Calu3 (cell line): ENCODE measurements at regions of chr3 and their contacts with region 1.

Region 1: GRCh38 chr3:89851974-89852621 is 744.7 kb downstream of the EPHA3 start:
- DNase-seq: peak; percentile 78
- H3K4me3 Mint-ChIP-seq: no peak overlapping the region
- H3K27ac Mint-ChIP-seq: no peak overlapping the region
- H3K4me1 Mint-ChIP-seq: no peaks in the 10 kb centered on the region
- H3K27me3 Mint-ChIP-seq: no peaks in the 10 kb centered on the region
- CTCF ChIP-seq: peak; percentile 53

Region 2: DNA sequence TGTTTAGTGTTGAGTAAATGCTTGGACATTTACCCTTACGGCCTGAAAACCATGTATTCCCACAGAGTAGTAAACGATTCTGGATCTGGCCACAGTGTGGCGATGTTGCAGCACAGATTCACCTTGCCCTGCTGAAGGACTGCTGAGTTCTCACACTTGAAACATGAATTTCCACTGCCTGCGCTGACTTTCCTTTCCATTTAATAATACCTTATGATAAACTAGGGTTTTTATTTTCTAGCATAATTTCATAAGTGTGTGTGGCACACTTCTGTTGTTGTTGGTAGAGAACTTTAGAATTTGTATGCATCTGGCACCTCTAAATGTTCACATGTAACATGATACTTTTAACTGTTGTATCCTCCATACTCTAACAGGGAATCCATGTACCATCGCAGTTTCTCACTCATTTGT is 1648.4 kb before region 1 on chr3:
- CTCF ChIA-PET with region 1: no interaction called
- intact Hi-C with region 1: loop called (anchors 1 kb)
- DNase-seq: peak; percentile 79
- H3K4me3 Mint-ChIP-seq: no peak overlapping the region
- H3K27ac Mint-ChIP-seq: no peak overlapping the region
- H3K4me1 Mint-ChIP-seq: peaks cover 19% of the 10 kb centered on the region
- H3K27me3 Mint-ChIP-seq: no peaks in the 10 kb centered on the region
- CTCF ChIP-seq: peak; percentile 63

Region 3: GRCh38 chr3:89107461-89108290 is 744.4 kb before region 1 on chr3 and contains the start of gene EPHA3:
- CTCF ChIA-PET with region 1: interaction called, 12 read pairs
- intact Hi-C with region 1: loop called (anchors 5 kb)
- DNase-seq: peak; percentile 89
- H3K4me3 Mint-ChIP-seq: peak within 1 kb of the TSS; percentile 79
- H3K27ac Mint-ChIP-seq: peak within 1 kb of the TSS; percentile 50
- H3K4me1 Mint-ChIP-seq: peaks cover 11% of the 10 kb centered on the region
- H3K27me3 Mint-ChIP-seq: no peaks in the 10 kb centered on the region
- CTCF ChIP-seq: no peak
- total RNA-seq, gene EPHA3: 28.8 and 31.6 TPM in 2 replicates

Region 4: DNA sequence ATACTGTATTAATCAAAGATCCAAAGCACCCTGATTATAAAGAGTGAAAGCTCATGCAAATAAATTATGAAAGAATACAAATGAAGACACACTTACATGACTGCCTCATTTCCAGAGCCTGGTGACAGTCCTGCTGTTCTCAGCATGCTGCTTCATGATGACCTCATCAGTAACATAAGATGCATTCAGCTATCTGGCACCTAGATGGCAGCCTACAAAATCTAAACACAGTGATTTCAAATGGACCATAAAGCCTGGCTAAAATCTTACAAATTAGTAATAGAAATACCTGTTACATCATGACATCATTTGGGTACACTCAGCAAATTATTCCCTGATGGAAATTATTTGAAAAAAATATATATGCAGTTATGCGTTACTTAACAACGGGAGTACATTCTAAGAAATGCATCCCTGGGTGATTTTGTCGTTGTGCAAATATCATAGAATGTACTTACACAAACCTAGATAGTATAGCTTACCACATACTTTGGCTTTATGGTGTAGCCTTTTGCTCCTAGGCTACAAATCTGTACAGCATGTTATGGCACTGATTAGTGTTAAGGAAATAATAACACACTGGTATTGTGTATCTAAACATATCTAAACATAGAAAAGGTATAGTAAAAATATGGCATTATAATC is 537.5 kb before region 1 on chr3:
- CTCF ChIA-PET with region 1: no interaction called
- intact Hi-C with region 1: loop called (anchors 10 kb)
- DNase-seq: no peak
- H3K4me3 Mint-ChIP-seq: no peak overlapping the region
- H3K27ac Mint-ChIP-seq: no peak overlapping the region
- H3K4me1 Mint-ChIP-seq: no peaks in the 10 kb centered on the region
- H3K27me3 Mint-ChIP-seq: no peaks in the 10 kb centered on the region
- CTCF ChIP-seq: no peak

Region 5: GRCh38 chr3:89560546-89560945 is 291.6 kb before region 1 on chr3:
- CTCF ChIA-PET with region 1: interaction called, 4 read pairs
- intact Hi-C with region 1: loop called (anchors 5 kb)
- DNase-seq: no peak
- H3K4me3 Mint-ChIP-seq: no peak overlapping the region
- H3K27ac Mint-ChIP-seq: no peak overlapping the region
- H3K4me1 Mint-ChIP-seq: peaks cover 28% of the 10 kb centered on the region
- H3K27me3 Mint-ChIP-seq: no peaks in the 10 kb centered on the region
- CTCF ChIP-seq: no peak

Region 6: GRCh38 chr3:89690646-89691045 is 161.5 kb before region 1 on chr3:
- CTCF ChIA-PET with region 1: no interaction called
- intact Hi-C with region 1: loop called (anchors 10 kb)
- DNase-seq: no peak
- H3K4me3 Mint-ChIP-seq: no peak overlapping the region
- H3K27ac Mint-ChIP-seq: no peak overlapping the region
- H3K4me1 Mint-ChIP-seq: peaks cover 13% of the 10 kb centered on the region
- H3K27me3 Mint-ChIP-seq: no peaks in the 10 kb centered on the region
- CTCF ChIP-seq: no peak

Region 7: DNA sequence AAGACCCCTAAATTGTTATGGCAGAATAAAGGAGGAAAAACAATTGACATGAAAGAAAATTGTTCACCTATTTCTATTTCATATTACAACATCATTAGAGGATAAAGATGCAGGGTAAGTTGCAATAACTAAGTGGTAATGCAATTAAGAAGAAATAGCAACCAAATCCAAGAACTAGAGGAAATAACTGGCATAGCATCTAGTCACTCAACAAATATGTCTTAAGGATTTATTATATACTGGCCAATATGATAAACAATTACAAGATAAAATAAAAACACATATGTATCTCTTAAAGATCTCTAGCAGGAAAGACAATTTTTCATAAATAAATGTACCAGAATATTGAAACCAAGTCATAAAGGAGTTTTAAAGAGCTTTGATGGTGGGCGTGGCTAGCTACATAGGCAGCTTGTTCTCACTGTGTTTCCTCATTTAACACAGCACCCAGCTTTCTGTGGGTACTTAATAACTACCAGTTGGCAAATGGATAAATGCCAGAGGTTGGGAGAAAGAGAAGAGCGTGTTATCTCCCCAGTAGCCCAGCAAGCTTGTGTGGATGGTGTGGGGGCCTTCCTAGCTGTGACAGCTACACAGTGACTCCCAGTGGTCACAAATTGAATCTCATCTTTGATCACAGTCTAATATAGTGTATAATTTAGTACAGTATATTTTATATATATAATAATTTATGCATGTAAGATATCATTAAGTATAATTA is 239.3 kb after region 1 on chr3:
- CTCF ChIA-PET with region 1: interaction called, 3 read pairs
- intact Hi-C with region 1: loop called (anchors 5 kb)
- DNase-seq: peak; percentile 51
- H3K4me3 Mint-ChIP-seq: no peak overlapping the region
- H3K27ac Mint-ChIP-seq: no peak overlapping the region
- H3K4me1 Mint-ChIP-seq: peaks cover 7% of the 10 kb centered on the region
- H3K27me3 Mint-ChIP-seq: no peaks in the 10 kb centered on the region
- CTCF ChIP-seq: peak; percentile 40